ENCODE measurements at regions of chr4 and their contacts with region 1.

Region 1: GRCh38 chr4:44320833-44321232 is 127.8 kb downstream of the KCTD8 start:
- DNase-seq: no peak
- ATAC-seq: no peak
- H3K4me3 ChIP-seq: no peak overlapping the region
- H3K27ac ChIP-seq: no peak overlapping the region
- H3K4me1 ChIP-seq: peaks cover 3% of the 10 kb centered on the region
- H3K27me3 ChIP-seq: no peaks in the 10 kb centered on the region
- CTCF ChIP-seq: no peak

Region 2: GRCh38 chr4:43680421-43680820 is 640.4 kb before region 1 on chr4:
- intact Hi-C with region 1: loop called in 1 of 2 experiments (anchors 5 kb)
- DNase-seq: no peak
- ATAC-seq: no peak
- H3K4me3 ChIP-seq: no peak overlapping the region
- H3K27ac ChIP-seq: no peak overlapping the region
- H3K4me1 ChIP-seq: no peaks in the 10 kb centered on the region
- H3K27me3 ChIP-seq: no peaks in the 10 kb centered on the region
- CTCF ChIP-seq: no peak